GM18951 (cell line): ENCODE measurements at regions of chr1 and their contacts with region 1.

Region 1: GRCh38 chr1:8560611-8561544 is 243.0 kb downstream of the SLC45A1 start:
- POLR2A ChIP-seq: no peak

Region 2: GRCh38 chr1:8671306-8671917 is 110.5 kb after region 1 on chr1:
- in situ Hi-C with region 1: loop called (anchors 25 kb)
- POLR2A ChIP-seq: no peak

Region 3: GRCh38 chr1:8822373-8823294 is 261.8 kb after region 1 on chr1:
- in situ Hi-C with region 1: loop called (anchors 10 kb)
- POLR2A ChIP-seq: no peak